ENCODE measurements at regions of chr6 and their contacts with region 1.

Region 1: GRCh38 chr6:73461537-73462350 is at the start of gene MTO1:
- DNase-seq: peak; percentile 83 to 93 (median 84)
- H3K4me3 ChIP-seq: peak within 1 kb of the TSS; percentile 89 to 100
- H3K4me3 Mint-ChIP-seq: peak within 1 kb of the TSS; percentile 95 to 99 (median 97)
- H3K27ac ChIP-seq: peak within 1 kb of the TSS; percentile 91
- H3K27ac Mint-ChIP-seq: peak within 1 kb of the TSS; percentile 95 to 100 (median 98)
- H3K4me1 ChIP-seq: peaks cover 46% of the 10 kb centered on the region
- H3K4me1 Mint-ChIP-seq: peaks cover 25 to 64% (median 44%) of the 10 kb centered on the region in 4 donors
- H3K27me3 ChIP-seq: no peaks in the 10 kb centered on the region
- H3K27me3 Mint-ChIP-seq: no peaks in the 10 kb centered on the region
- total RNA-seq, gene MTO1: 98.9 to 99.8 TPM

Region 2: DNA sequence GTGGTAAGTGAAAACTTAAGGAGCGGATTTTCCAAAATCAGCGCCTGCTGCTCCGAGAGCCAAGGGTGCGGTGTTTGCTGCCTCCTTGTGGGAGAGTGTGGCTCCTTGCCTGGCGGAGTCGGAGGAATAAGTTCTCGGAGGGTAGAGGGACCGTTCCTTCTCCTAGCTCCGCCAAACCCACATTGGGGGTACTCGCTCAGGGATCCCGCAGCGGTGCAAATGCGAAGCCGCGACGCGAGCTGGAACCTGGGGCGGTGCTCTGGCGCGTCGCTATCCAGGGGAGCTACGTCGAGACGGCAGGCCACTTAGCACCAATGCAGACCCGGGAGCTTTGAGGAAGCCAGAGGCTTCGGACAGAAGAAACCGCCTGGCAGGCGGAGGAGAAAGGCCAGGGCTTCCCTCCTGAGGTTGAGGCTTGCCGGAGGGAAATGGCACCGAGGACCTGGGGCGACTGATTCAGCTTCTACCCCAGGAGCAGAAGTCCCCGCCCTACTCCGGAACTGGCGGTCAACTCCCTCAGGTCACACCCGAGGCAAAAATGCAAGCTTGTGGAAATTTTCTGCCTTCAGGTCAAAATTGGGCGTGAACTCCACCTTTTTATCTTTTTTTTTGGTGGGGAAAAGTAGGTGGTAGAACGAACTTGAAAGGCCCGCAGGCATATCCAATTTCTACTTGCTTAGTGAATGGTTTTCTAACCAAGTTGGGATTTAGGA is 72.8 kb before region 1 on chr6:
- CTCF ChIA-PET with region 1: interaction called, 10 read pairs
- POLR2A ChIA-PET with region 1: interaction called, 19 read pairs
- intact Hi-C with region 1: loop called (anchors 1 kb)
- DNase-seq: peak; percentile 43 to 64 (median 52)
- H3K4me3 ChIP-seq: peak overlapping the region; percentile 57 to 71
- H3K4me3 Mint-ChIP-seq: peak overlapping the region; percentile 86 to 88 (median 87)
- H3K27ac ChIP-seq: peak overlapping the region; percentile 65
- H3K27ac Mint-ChIP-seq: peak overlapping the region; percentile 82 to 93 (median 90)
- H3K4me1 ChIP-seq: peaks cover 30% of the 10 kb centered on the region
- H3K4me1 Mint-ChIP-seq: peaks cover 17 to 40% (median 28%) of the 10 kb centered on the region in 4 donors
- H3K27me3 ChIP-seq: no peaks in the 10 kb centered on the region
- H3K27me3 Mint-ChIP-seq: no peaks in the 10 kb centered on the region

Region 3: GRCh38 chr6:73394577-73395354 is 67.0 kb before region 1 on chr6 and contains the start of gene DDX43:
- CTCF ChIA-PET with region 1: no interaction called
- POLR2A ChIA-PET with region 1: interaction called, 18 read pairs
- intact Hi-C with region 1: no loop called
- DNase-seq: peak; percentile 33 to 61 (median 39)
- H3K4me3 ChIP-seq: peak within 1 kb of the TSS in 1 of 2 donors; percentile 40
- H3K4me3 Mint-ChIP-seq: peak within 1 kb of the TSS; percentile 57 to 88 (median 68)
- H3K27ac ChIP-seq: peak within 1 kb of the TSS; percentile 30
- H3K27ac Mint-ChIP-seq: peak within 1 kb of the TSS in 6 of 7 donors; percentile 57 to 98 (median 89)
- H3K4me1 ChIP-seq: peaks cover 19% of the 10 kb centered on the region
- H3K4me1 Mint-ChIP-seq: peaks cover 15 to 37% (median 22%) of the 10 kb centered on the region in 4 donors
- H3K27me3 ChIP-seq: no peaks in the 10 kb centered on the region
- H3K27me3 Mint-ChIP-seq: no peaks in the 10 kb centered on the region
- total RNA-seq, gene DDX43: 0.81 to 1.9 TPM

Region 4: DNA sequence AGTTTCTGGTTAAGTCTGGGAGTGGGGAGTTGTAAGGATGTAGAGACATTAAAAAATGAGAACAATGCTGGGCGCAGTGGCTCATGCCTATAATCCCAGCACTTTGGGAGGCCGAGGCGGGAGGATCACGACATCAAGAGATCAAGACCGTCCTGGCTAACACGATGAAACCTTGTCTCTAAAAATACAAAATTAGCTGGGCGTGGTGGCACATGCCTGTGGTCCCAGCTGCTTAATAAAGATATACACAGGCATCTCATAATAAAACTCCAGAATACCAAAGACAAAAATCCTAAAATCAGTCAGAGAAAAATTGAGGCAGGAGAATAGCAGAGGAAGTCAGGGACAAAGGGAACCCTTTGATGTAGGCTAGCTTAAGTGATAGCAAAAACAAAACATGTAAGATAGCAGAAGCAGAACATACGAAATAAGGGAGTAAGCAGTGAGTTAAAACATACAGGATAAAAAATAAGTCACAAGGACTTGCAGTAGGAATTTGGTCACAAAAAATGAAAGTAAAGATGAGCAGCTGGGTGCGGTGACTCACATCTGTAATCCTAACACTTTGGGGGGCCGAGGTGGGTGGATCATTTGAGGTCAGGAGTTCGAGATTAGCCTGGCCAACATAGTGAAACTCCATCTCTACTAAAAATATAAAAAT is 43.5 kb before region 1 on chr6:
- CTCF ChIA-PET with region 1: interaction called, 5 read pairs
- POLR2A ChIA-PET with region 1: interaction called, 33 read pairs
- intact Hi-C with region 1: loop called (anchors 2 kb)
- DNase-seq: no peak
- H3K4me3 ChIP-seq: no peak overlapping the region
- H3K4me3 Mint-ChIP-seq: peak overlapping the region in 3 of 8 donors; percentile 15 to 61 (median 43)
- H3K27ac ChIP-seq: no peak overlapping the region
- H3K27ac Mint-ChIP-seq: peak overlapping the region; percentile 35 to 90 (median 84)
- H3K4me1 ChIP-seq: peaks cover 26% of the 10 kb centered on the region
- H3K4me1 Mint-ChIP-seq: peaks cover 21 to 29% (median 22%) of the 10 kb centered on the region in 4 donors
- H3K27me3 ChIP-seq: no peaks in the 10 kb centered on the region
- H3K27me3 Mint-ChIP-seq: no peaks in the 10 kb centered on the region

Region 5: GRCh38 chr6:73451223-73452107 is 10.3 kb before region 1 on chr6:
- CTCF ChIA-PET with region 1: interaction called, 42 read pairs
- POLR2A ChIA-PET with region 1: interaction called, 135 read pairs
- intact Hi-C with region 1: loop called (anchors 1 kb)
- DNase-seq: peak; percentile 41 to 64 (median 49)
- H3K4me3 ChIP-seq: peak overlapping the region; percentile 97 to 98
- H3K4me3 Mint-ChIP-seq: peak overlapping the region; percentile 90 to 99 (median 97)
- H3K27ac ChIP-seq: peak overlapping the region; percentile 92
- H3K27ac Mint-ChIP-seq: peak overlapping the region; percentile 88 to 97 (median 92)
- H3K4me1 ChIP-seq: peaks cover 32% of the 10 kb centered on the region
- H3K4me1 Mint-ChIP-seq: peaks cover 14 to 44% (median 24%) of the 10 kb centered on the region in 4 donors
- H3K27me3 ChIP-seq: no peaks in the 10 kb centered on the region
- H3K27me3 Mint-ChIP-seq: no peaks in the 10 kb centered on the region

Region 6: GRCh38 chr6:73471686-73472290 is 10.0 kb after region 1 on chr6:
- CTCF ChIA-PET with region 1: interaction called, 3 read pairs
- POLR2A ChIA-PET with region 1: interaction called, 19 read pairs
- intact Hi-C with region 1: no loop called
- DNase-seq: no peak
- H3K4me3 ChIP-seq: no peak overlapping the region
- H3K4me3 Mint-ChIP-seq: peak overlapping the region in 6 of 8 donors; percentile 9 to 76 (median 44)
- H3K27ac ChIP-seq: no peak overlapping the region
- H3K27ac Mint-ChIP-seq: peak overlapping the region; percentile 38 to 90 (median 83)
- H3K4me1 ChIP-seq: peaks cover 12% of the 10 kb centered on the region
- H3K4me1 Mint-ChIP-seq: peaks cover 8 to 22% (median 13%) of the 10 kb centered on the region in 4 donors
- H3K27me3 ChIP-seq: no peaks in the 10 kb centered on the region
- H3K27me3 Mint-ChIP-seq: no peaks in the 10 kb centered on the region

Region 7: GRCh38 chr6:73569121-73569520 is 107.4 kb after region 1 on chr6:
- CTCF ChIA-PET with region 1: no interaction called
- POLR2A ChIA-PET with region 1: no interaction called
- intact Hi-C with region 1: no loop called
- DNase-seq: no peak
- H3K4me3 ChIP-seq: no peak overlapping the region
- H3K4me3 Mint-ChIP-seq: no peak overlapping the region
- H3K27ac ChIP-seq: no peak overlapping the region
- H3K27ac Mint-ChIP-seq: no peak overlapping the region
- H3K4me1 ChIP-seq: no peaks in the 10 kb centered on the region
- H3K4me1 Mint-ChIP-seq: peaks cover 0 to 5% (median under 1%) of the 10 kb centered on the region in 4 donors
- H3K27me3 ChIP-seq: no peaks in the 10 kb centered on the region
- H3K27me3 Mint-ChIP-seq: no peaks in the 10 kb centered on the region

Region 8: DNA sequence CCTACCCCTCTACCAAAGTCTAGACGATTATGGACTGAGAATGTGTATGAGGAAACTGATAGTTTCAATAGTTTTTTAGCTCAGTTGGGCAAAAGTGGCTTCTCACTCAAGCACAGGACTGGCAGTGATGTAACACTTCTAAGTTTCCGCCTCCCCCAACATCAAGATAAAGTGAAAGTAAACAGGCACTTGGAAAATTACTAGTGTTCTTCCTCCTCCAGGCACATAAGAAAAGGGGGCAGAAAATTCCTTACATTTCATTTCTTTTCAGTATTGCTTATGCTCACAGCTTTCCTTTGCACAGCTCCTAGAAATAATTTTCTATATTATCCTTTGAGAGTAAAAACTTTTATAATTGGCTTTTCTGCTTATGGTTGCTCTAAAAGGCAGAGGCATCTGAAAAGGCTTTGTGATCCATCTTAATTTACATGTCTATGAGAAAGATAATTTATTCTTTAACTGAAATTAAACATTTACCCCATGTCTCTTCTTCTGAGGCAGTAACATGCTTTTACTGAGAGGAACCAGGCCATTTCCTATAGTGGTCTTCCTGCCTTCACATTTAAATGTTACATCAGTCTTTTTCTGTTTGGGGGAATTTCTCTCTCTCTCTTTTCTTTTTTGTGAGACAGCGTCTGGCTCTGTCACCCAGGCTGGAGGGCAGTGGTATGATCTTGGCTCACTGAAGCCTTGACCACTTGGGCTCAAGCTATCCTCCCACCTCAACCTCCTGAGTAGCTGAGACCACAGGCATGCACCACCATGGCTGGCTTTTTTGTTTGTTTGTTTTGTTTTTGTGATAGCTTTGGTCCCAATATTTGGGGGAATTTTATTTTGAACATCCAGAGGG is 124.0 kb after region 1 on chr6:
- CTCF ChIA-PET with region 1: interaction called, 5 read pairs
- POLR2A ChIA-PET with region 1: interaction called, 15 read pairs
- intact Hi-C with region 1: no loop called
- DNase-seq: peak; percentile 57 to 69 (median 63)
- H3K4me3 ChIP-seq: peak overlapping the region; percentile 54 to 56
- H3K4me3 Mint-ChIP-seq: peak overlapping the region; percentile 78 to 88 (median 84)
- H3K27ac ChIP-seq: peak overlapping the region; percentile 70
- H3K27ac Mint-ChIP-seq: peak overlapping the region; percentile 93 to 99 (median 98)
- H3K4me1 ChIP-seq: peaks cover 26% of the 10 kb centered on the region
- H3K4me1 Mint-ChIP-seq: peaks cover 15 to 34% (median 19%) of the 10 kb centered on the region in 4 donors
- H3K27me3 ChIP-seq: no peaks in the 10 kb centered on the region
- H3K27me3 Mint-ChIP-seq: no peaks in the 10 kb centered on the region

Region 9: GRCh38 chr6:73888050-73888449 is 426.3 kb after region 1 on chr6:
- CTCF ChIA-PET with region 1: no interaction called
- POLR2A ChIA-PET with region 1: no interaction called
- intact Hi-C with region 1: no loop called
- DNase-seq: no peak
- H3K4me3 ChIP-seq: no peak overlapping the region
- H3K4me3 Mint-ChIP-seq: no peak overlapping the region
- H3K27ac ChIP-seq: no peak overlapping the region
- H3K27ac Mint-ChIP-seq: no peak overlapping the region
- H3K4me1 ChIP-seq: peaks cover 8% of the 10 kb centered on the region
- H3K4me1 Mint-ChIP-seq: peaks cover 0 to 13% (median 0%) of the 10 kb centered on the region in 4 donors
- H3K27me3 ChIP-seq: no peaks in the 10 kb centered on the region
- H3K27me3 Mint-ChIP-seq: no peaks in the 10 kb centered on the region